Activated T-helper 1 cell treated with anti-CD3 and anti-CD28 coated beads, Interleukin-12 subunit alpha, Interleukin-12 subunit beta, Interleukin-2, Interleukin-4 antibody, amounts not matched to agents 30 ng/mL and 10 ng/mL and 1 ng/mL, durations not matched to agents 14 hours and 24 hours and 36 hours (primary cell): ENCODE measurements at regions of chrX and their contacts with region 1.

Region 1: DNA sequence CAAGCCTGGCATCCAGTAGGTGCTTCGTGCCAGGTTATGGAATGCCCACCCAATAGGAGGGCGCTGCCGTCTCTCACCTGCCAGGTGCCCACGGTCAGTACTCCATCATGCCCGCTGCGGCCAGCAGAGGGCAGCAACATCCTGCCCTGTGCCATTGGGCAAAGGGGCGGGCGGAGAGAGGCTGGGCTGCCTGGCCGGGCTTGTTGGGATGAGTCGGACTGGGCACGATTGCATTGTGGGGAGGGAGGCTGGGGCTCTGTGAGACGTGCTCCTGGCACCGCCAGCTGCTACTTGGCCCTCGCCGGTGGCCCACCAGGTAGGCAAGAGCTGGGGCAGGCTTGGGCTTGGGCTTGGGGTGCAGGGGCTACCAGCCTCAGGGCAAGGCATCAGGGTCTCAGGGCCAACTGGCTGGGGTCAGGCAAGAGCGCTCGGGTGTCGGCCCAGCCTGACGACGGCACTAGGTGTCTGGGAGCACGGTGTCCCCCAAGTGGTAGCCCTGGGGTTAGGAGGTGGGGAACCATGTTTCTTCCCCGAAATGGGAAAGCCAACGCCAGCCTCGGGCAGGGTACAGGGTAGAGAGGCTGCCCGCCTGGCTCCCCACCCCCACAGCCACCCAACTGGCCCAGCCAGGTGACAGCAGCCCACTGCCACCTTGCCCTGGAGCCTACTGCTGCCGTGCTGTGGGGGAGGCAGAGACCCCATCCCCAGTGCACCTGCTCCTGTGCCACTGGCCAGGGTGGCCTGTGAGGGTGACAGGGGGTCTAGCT is at the start of gene PLXNB3:
- DNase-seq: peak; percentile 58
- H3K4me3 Mint-ChIP-seq: no peak within 1 kb of the TSS
- H3K27ac Mint-ChIP-seq: no peak within 1 kb of the TSS
- H3K4me1 Mint-ChIP-seq: peaks cover 5% of the 10 kb centered on the region
- H3K27me3 Mint-ChIP-seq: peaks cover 5% of the 10 kb centered on the region
- total RNA-seq, gene PLXNB3: 0.21 and 0.81 TPM in 2 replicates

Region 2: GRCh38 chrX:153703036-153703370 is 61.2 kb before region 1 on chrX:
- intact Hi-C with region 1: no loop called
- DNase-seq: no peak
- H3K4me3 Mint-ChIP-seq: no peak overlapping the region
- H3K27ac Mint-ChIP-seq: no peak overlapping the region
- H3K4me1 Mint-ChIP-seq: no peaks in the 10 kb centered on the region
- H3K27me3 Mint-ChIP-seq: no peaks in the 10 kb centered on the region

Region 3: DNA sequence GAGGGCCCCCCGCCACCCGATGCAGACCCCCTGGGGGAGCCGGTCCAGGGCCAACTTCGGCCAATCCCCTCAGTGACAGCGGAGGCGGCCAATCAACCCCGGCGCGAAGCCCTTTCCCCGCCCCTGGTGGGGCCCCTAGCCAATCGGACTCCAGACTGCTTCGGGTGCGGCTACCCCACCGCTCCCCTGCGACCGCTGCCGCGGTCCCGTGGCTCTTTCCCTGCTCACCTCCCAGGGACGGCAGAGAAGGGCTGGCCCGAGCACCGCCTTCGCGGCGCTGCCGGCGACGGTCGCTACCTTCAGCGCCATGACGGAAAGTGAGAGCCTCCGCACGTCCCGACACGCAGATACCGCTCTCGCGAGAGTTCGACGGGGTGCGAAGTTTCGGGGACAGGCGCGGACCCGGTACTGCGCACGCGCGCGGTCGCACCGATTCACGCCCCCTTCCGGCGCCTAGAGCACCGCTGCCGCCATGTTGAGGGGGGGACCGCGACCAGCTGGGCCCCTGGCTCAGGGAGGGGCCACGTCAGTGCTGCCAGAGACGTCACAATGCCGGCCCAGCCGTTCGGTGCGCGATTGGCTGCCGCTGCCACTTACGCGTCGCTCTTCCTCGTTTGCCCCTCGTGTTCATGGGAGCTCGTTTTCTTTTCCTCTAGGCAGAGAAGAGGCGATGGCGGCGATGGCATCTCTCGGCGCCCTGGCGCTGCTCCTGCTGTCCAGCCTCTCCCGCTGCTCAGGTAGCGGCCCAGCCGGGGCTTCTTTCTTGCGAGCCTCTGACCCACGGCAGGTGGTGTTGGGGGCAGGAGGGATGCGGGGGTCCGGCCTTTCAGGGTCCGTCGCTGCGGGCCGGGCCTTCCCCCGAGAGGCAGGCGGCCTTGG is 30.1 kb after region 1 on chrX and contains the starts of genes IDH3G and SSR4:
- intact Hi-C with region 1: loop called (anchors 1 kb)
- DNase-seq: peak; percentile 91
- H3K4me3 Mint-ChIP-seq: peak within 1 kb of the TSS; percentile 96
- H3K27ac Mint-ChIP-seq: peak within 1 kb of the TSS; percentile 94
- H3K4me1 Mint-ChIP-seq: peaks cover 18% of the 10 kb centered on the region
- H3K27me3 Mint-ChIP-seq: no peaks in the 10 kb centered on the region
- total RNA-seq, gene IDH3G: 68.4 and 69.7 TPM in 2 replicates
- total RNA-seq, gene SSR4: 281 and 285 TPM in 2 replicates

Region 4: GRCh38 chrX:153947009-153947769 is 183.0 kb after region 1 on chrX:
- intact Hi-C with region 1: loop called (anchors 1 kb)
- DNase-seq: peak; percentile 67
- H3K4me3 Mint-ChIP-seq: peak overlapping the region; percentile 3
- H3K27ac Mint-ChIP-seq: peak overlapping the region; percentile 91
- H3K4me1 Mint-ChIP-seq: peaks cover 9% of the 10 kb centered on the region
- H3K27me3 Mint-ChIP-seq: no peaks in the 10 kb centered on the region

Region 5: GRCh38 chrX:153953342-153953830 is 189.2 kb after region 1 on chrX:
- intact Hi-C with region 1: loop called (anchors 1 kb)
- DNase-seq: peak; percentile 60
- H3K4me3 Mint-ChIP-seq: no peak overlapping the region
- H3K27ac Mint-ChIP-seq: peak overlapping the region; percentile 23
- H3K4me1 Mint-ChIP-seq: no peaks in the 10 kb centered on the region
- H3K27me3 Mint-ChIP-seq: no peaks in the 10 kb centered on the region